Vagina (tissue), 2 donors: ENCODE measurements at regions of chr6 and their contacts with region 1.

Region 1: GRCh38 chr6:4358414-4359114 is 223.2 kb upstream of the ECI2 start:
- DNase-seq: peak; percentile 98
- H3K4me3 ChIP-seq: peak overlapping the region in 1 of 2 donors; percentile 18
- H3K27ac ChIP-seq: peak overlapping the region; percentile 84
- H3K4me1 ChIP-seq: peaks cover 26% of the 10 kb centered on the region
- H3K27me3 ChIP-seq: no peaks in the 10 kb centered on the region
- CTCF ChIP-seq: no peak
- POLR2A ChIP-seq: no peak

Region 2: DNA sequence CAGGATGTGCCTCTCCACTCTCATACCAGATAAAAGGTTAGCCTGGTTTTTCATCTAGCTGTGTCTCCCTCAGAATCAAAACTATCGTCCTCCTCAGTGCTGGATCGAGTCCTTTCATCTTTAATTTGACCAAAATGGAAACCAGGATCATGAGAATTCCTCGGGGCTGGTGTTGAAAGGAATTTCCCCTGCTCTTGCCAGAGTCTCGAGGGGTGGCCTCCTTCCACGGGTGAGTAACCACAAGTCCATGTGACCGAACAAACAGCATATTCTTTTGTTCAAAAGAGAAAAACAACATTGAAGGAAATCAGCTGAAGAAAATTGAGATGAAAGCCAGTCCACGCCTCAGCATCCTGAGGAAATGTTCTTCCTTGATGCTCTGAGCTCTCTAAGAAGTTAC is 251.7 kb after region 1 on chr6:
- intact Hi-C with region 1: loop called (anchors 10 kb)
- DNase-seq: no peak
- H3K4me3 ChIP-seq: no peak overlapping the region
- H3K27ac ChIP-seq: peak overlapping the region; percentile 77
- H3K4me1 ChIP-seq: peaks cover 69% of the 10 kb centered on the region
- H3K27me3 ChIP-seq: no peaks in the 10 kb centered on the region
- CTCF ChIP-seq: no peak
- POLR2A ChIP-seq: no peak

Region 3: GRCh38 chr6:5003604-5004372 is 645.2 kb after region 1 on chr6 and contains the start of gene RPP40:
- intact Hi-C with region 1: no loop called
- DNase-seq: peak in 1 of 2 donors; percentile 97
- H3K4me3 ChIP-seq: peak within 1 kb of the TSS; percentile 62 to 66
- H3K27ac ChIP-seq: peak within 1 kb of the TSS; percentile 96
- H3K4me1 ChIP-seq: peaks cover 12% of the 10 kb centered on the region
- H3K27me3 ChIP-seq: no peaks in the 10 kb centered on the region
- CTCF ChIP-seq: peak; percentile 50 to 89 (median 73)
- POLR2A ChIP-seq: no peak
- total RNA-seq, gene RPP40: 4.7 TPM